GM10248 (cell line): ENCODE measurements at regions of chr6 and their contacts with region 1.

Region 1: DNA sequence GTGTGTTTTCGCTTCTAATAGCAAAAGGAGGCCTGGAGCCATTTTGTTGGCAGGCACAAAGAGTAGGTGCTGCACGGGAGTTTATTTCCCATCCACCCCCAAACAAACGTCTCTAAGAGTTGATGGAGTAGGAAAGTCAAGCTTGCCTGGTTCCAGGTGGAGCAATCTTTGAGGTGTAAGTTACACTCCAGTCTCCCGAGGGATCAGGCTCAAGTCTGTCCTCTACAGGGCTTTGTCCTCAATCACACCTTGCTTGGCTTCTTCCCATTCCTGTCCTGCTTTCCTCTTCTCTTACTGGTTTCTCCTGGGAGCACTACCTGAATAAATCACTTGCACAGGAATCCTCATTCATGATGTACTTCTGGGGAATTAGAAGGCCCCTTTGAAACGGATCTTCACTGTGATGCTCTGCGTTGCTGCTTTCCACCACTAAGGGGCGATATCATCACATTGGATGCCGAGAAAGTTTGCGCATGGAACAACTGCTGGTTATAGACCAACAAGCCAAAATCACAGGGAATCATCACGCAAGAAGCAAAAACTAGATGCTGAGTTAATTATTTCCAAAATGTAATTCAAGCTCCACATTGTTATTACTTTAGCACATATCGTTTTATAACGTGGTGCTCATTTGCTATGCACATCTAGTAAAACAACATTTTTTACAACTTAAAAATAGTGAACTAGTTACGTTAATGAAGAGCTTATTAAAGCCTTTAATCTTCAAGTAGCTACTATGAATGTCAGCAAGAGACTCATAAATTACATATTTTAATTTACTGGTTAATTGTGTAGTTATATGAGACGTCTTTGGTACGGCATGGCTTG is 156.8 kb downstream of the DNAH8 start:
- DNase-seq: peak; percentile 41
- CTCF ChIP-seq: peak; percentile 91

Region 2: DNA sequence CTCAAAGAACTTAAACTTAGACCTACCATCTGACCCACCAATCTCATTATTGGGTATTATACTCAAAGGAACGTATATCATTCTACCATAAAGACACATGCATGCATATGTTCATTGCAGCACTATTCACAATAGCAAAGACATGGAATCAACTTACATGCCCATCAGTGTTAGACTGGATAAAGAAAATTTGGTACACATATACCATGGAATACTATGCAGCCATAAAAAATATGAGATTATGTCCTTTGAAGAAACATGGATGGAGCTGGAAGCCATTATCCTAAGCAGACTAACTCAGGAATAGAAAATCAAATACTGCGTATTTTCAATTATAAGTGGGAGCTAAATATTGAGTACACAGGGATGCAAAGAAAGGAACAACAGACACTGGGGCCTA is 10.2 kb after region 1 on chr6:
- CTCF ChIA-PET with region 1: interaction called, 37 read pairs
- POLR2A ChIA-PET with region 1: no interaction called
- DNase-seq: no peak
- CTCF ChIP-seq: no peak